Left colon (tissue), 2 donors: ENCODE measurements at regions of chr4 and their contacts with region 1.

Region 1: DNA sequence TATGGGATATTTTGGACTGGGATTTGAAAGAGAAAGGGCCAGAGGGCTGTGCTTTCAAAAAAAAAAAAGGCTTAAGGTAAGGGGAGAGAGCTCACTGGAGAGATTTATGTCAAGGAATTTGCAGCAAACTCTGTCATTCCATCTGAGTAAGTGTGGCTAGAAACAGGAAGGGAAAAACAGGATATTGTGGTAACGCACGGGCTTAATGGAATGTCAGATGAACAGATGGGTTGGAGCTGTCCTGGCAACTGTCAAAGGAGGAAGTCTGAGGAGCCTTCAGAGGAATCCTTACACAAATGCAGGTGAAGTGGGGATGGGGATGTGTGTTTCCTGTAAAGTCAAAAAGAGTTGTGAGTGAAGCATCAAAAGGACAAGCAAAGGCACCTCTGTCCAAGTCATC is 15.1 kb upstream of the NKX3-2 start:
- DNase-seq: no peak
- ATAC-seq: no peak

Region 2: GRCh38 chr4:12734586-12734985 is 824.8 kb before region 1 on chr4:
- intact Hi-C with region 1: loop called in 1 of 2 experiments (anchors 10 kb)
- DNase-seq: no peak
- ATAC-seq: no peak

Region 3: DNA sequence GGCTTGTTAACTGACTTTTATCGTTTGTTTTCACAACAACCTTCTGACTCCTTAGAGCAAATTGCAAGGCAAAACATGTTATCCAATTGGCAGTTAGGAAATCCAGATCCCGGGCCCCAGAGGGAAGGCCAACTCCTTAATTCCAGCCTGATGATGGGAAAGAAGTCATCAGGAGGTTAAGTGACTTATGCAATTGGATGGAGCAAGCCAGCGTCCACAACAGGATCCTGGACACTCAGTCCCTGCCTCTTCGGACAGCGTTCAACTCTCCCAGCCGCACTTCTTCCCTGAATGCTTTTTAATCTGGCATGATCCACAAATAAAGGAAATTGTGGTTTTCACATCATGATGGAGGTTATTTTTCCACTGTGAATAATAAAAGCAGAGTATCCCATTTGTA is 385.4 kb before region 1 on chr4:
- intact Hi-C with region 1: no loop called
- DNase-seq: peak in 1 of 2 donors; percentile 40
- ATAC-seq: no peak

Region 4: DNA sequence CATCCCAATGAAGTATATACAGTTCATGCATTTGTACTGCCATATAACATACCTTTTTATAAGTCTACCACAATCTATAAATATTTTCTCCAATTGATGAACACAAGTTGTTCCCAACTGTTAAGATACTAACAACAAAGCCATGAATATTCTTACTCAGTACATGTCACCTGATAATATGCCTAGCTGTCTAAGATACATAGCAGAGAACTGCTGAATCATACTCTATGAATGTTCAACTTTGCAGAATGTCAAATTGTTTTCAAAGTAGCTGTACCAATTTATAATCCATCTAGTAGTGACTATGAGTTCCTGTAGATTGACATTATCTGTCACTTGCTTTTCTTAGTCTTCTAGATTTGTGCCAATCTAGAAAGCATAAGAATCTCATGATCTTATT is 160.2 kb before region 1 on chr4:
- intact Hi-C with region 1: no loop called
- DNase-seq: no peak
- ATAC-seq: no peak

Region 5: DNA sequence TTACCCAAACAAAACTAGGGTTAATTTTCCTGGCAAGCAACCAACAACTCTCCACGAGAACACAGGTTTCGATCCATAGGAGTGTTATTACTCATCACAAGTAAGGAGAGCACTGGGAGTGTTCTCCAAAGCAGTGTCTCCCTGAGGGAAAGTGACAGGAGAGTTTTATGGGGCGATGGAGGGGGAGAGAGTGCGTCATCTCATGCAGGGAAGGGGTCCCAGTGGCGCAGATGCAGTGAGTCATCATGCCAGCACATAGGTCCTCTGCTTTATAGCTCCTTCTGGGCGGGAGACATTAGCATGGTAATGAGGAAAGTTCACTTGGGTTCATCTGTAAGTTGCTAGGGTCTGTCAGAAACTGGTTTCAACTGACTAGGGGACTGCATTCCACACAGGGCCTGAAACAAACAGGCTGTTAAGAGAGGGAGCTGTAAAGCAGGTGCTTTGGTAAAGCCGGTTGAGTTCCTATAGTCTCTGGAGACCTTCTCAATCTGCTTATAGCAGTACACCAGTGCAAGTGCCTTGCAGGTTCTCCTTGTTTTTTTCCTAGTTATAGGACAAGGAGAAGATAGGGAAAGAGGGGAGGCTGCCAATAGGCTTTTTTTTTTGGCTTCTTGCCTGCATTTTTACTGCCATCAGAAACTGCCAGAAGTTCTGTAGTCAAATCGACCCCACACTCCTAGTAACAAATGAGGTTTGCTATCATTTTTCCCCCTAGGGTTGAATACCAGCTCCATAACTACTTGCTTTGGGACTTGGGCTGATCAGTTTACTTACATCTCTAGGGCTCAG is 80.9 kb after region 1 on chr4:
- intact Hi-C with region 1: no loop called
- DNase-seq: no peak
- ATAC-seq: no peak